ENCODE measurements at regions of chr18 and their contacts with region 1.

Region 1: DNA sequence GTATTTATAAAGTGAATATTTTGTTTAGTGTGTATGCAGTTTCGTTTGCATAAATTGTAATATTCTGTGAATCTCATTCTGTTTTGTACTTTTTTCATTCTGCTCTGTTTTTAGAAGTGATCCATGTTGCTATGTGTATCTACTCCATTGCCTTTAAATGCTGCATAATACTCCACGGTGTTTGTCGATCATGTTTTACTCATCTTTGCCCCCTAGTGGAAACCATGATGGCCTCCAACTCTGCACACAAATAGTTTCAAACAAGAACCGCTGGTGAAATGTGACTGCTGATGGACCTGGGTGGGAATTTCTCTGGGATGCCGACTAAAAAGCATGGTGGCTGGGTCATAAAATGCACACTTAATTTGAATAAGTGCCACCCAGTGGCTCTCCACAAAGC is 32.0 kb upstream of the SKOR2 start:
- DNase-seq: peak; percentile 33
- ATAC-seq: peak; percentile 79; the same call in 1 of the 2 replicates
- H3K4me3 ChIP-seq: no peak overlapping the region
- H3K27ac ChIP-seq: no peak overlapping the region
- H3K4me1 ChIP-seq: no peaks in the 10 kb centered on the region
- H3K27me3 ChIP-seq: no peaks in the 10 kb centered on the region
- CTCF ChIP-seq: peak; percentile 53
- POLR2A ChIP-seq: no peak
- RAD21 ChIP-seq: peak; percentile 40

Region 2: GRCh38 chr18:47331026-47331425 is 47.5 kb after region 1 on chr18:
- CTCF ChIA-PET with region 1: no interaction called
- POLR2A ChIA-PET with region 1: no interaction called
- dilution Hi-C with region 1: no loop called
- in situ Hi-C with region 1: no loop called
- intact Hi-C with region 1: no loop called
- DNase-seq: no peak
- ATAC-seq: no peak
- H3K4me3 ChIP-seq: no peak overlapping the region
- H3K27ac ChIP-seq: no peak overlapping the region
- H3K4me1 ChIP-seq: no peaks in the 10 kb centered on the region
- H3K27me3 ChIP-seq: no peaks in the 10 kb centered on the region
- CTCF ChIP-seq: no peak
- POLR2A ChIP-seq: no peak
- RAD21 ChIP-seq: no peak

Region 3: GRCh38 chr18:47756364-47757016 is 473.0 kb after region 1 on chr18:
- CTCF ChIA-PET with region 1: no interaction called
- POLR2A ChIA-PET with region 1: interaction called, 3 read pairs
- dilution Hi-C with region 1: no loop called
- in situ Hi-C with region 1: no loop called
- intact Hi-C with region 1: loop called (anchors 5 kb)
- DNase-seq: peak; percentile 33
- ATAC-seq: peak; percentile 93
- H3K4me3 ChIP-seq: no peak overlapping the region
- H3K27ac ChIP-seq: no peak overlapping the region
- H3K4me1 ChIP-seq: no peaks in the 10 kb centered on the region
- H3K27me3 ChIP-seq: no peaks in the 10 kb centered on the region
- CTCF ChIP-seq: peak; percentile 79
- POLR2A ChIP-seq: no peak
- RAD21 ChIP-seq: peak; percentile 48